CD4-positive, alpha-beta memory T cell (primary cell): ENCODE measurements at regions of chr16 and their contacts with region 1.

Region 1: DNA sequence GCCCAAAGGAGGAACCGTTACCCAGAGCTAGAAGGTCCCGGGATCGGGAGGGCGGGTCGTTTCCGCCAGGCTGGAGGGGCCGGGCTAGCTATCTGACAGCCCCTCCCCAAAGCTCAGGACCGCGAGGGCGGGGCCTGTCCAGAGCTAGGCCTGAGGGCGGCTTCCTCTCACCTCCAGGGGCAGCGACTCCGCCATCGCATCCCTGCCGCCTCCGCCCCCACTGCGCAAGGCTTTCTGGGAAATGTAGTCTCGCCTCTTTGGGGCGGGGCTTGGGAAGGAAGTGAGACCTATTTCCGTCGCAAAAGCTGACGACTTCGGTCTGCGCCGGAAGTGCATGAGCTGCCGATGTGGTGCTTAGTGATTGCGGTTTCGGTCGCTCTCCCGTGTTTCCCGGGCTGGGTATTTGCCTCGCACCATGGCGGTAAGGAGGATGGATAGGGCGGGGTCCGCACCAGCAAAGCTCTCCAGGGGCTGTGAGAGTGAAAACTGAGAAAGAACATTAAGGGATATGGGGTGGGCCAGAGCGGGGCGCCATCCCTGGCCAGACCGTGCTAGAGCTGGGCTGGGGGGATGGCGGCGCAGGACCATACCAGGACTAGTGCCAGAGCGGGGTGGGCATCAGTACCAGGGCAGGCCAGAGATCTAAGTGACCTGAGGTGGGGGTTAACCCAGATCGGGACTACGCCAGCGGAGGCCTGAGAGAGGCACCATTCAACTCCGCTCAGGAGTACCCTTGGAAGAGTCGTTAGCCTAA is at the start of gene TMEM208:
- DNase-seq: peak; percentile 95 to 99 (median 97)
- H3K4me3 ChIP-seq: peak within 1 kb of the TSS; percentile 73 to 99
- H3K4me3 Mint-ChIP-seq: peak within 1 kb of the TSS; percentile 98 to 100 (median 100)
- H3K27ac ChIP-seq: peak within 1 kb of the TSS; percentile 88
- H3K27ac Mint-ChIP-seq: peak within 1 kb of the TSS; percentile 96 to 100 (median 99)
- H3K4me1 ChIP-seq: peaks cover 51% of the 10 kb centered on the region
- H3K4me1 Mint-ChIP-seq: peaks cover 43 to 58% (median 54%) of the 10 kb centered on the region in 4 donors
- H3K27me3 ChIP-seq: no peaks in the 10 kb centered on the region
- H3K27me3 Mint-ChIP-seq: no peaks in the 10 kb centered on the region
- total RNA-seq, gene TMEM208: 35.5 to 35.7 TPM

Region 2: GRCh38 chr16:67191995-67192681 is 34.8 kb before region 1 on chr16 and contains the start of gene E2F4:
- CTCF ChIA-PET with region 1: no interaction called
- POLR2A ChIA-PET with region 1: interaction called, 15 read pairs
- intact Hi-C with region 1: loop called (anchors 2 kb)
- DNase-seq: peak; percentile 80 to 85 (median 83)
- H3K4me3 ChIP-seq: peak within 1 kb of the TSS; percentile 84 to 87
- H3K4me3 Mint-ChIP-seq: peak within 1 kb of the TSS; percentile 86 to 96 (median 90)
- H3K27ac ChIP-seq: peak within 1 kb of the TSS; percentile 80
- H3K27ac Mint-ChIP-seq: peak within 1 kb of the TSS; percentile 84 to 95 (median 91)
- H3K4me1 ChIP-seq: peaks cover 30% of the 10 kb centered on the region
- H3K4me1 Mint-ChIP-seq: peaks cover 24 to 50% (median 41%) of the 10 kb centered on the region in 4 donors
- H3K27me3 ChIP-seq: no peaks in the 10 kb centered on the region
- H3K27me3 Mint-ChIP-seq: no peaks in the 10 kb centered on the region
- total RNA-seq, gene E2F4: 87.3 to 91.3 TPM

Region 3: DNA sequence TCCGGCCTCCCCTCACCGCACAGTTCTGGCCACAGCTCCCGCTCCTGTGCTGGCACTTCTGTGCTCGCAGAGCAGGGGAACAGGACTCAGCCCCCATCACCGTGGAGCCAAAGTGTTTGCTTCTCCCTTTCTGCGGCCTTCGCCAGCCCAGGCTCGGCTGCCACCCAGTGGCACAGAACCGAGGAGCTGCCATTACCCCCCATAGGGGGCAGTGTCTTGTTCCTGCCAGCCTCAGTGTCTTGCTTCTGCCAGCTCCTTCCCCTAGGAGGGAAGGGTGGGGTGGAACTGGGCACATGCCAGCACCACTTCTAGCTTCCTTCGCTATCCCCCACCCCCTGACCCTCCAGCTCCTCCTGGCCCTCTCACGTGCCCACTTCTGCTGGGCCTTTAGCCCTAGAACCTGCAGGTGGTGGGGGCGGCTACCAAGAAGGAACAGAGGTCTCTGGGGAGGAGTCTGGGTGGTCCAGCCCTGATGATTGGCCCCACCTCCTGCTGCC is 28.7 kb before region 1 on chr16:
- CTCF ChIA-PET with region 1: interaction called, 8 read pairs
- POLR2A ChIA-PET with region 1: interaction called, 15 read pairs
- intact Hi-C with region 1: loop called (anchors 2 kb)
- DNase-seq: peak in 1 of 5 donors; percentile 22
- H3K4me3 ChIP-seq: no peak overlapping the region
- H3K4me3 Mint-ChIP-seq: no peak overlapping the region
- H3K27ac ChIP-seq: no peak overlapping the region
- H3K27ac Mint-ChIP-seq: peak overlapping the region in 4 of 7 donors; percentile 53 to 78 (median 73)
- H3K4me1 ChIP-seq: peaks cover 11% of the 10 kb centered on the region
- H3K4me1 Mint-ChIP-seq: peaks cover 11 to 41% (median 28%) of the 10 kb centered on the region in 4 donors
- H3K27me3 ChIP-seq: no peaks in the 10 kb centered on the region
- H3K27me3 Mint-ChIP-seq: no peaks in the 10 kb centered on the region

Region 4: DNA sequence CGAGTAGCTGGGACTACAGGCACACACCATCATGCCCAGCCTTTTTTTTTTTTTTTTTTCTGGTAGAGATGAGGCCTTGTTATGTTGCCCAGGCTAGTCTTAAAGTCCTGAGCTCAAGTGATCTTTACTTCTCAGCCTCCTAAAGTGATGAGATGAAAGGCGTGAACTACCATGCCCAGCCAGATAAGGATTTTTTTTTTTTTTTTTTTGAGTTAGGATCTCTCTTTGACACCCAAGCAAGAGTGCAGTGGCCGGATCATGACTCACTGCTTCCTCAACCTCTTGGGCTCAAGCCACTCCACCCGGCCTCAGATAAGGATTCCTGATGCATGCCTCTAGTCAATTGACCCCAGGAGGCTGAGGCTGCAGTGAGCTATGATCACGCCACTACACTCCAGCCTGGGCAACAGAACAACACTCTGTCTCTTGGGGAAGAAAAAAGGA is 41.2 kb after region 1 on chr16:
- CTCF ChIA-PET with region 1: no interaction called
- POLR2A ChIA-PET with region 1: no interaction called
- intact Hi-C with region 1: no loop called
- DNase-seq: no peak
- H3K4me3 ChIP-seq: no peak overlapping the region
- H3K4me3 Mint-ChIP-seq: no peak overlapping the region
- H3K27ac ChIP-seq: no peak overlapping the region
- H3K27ac Mint-ChIP-seq: no peak overlapping the region
- H3K4me1 ChIP-seq: no peaks in the 10 kb centered on the region
- H3K4me1 Mint-ChIP-seq: no peaks in the 10 kb centered on the region
- H3K27me3 ChIP-seq: no peaks in the 10 kb centered on the region
- H3K27me3 Mint-ChIP-seq: peaks cover 2 to 7% of the 10 kb centered on the region in 2 donors

Region 5: GRCh38 chr16:67279296-67280089 is 52.5 kb after region 1 on chr16 and contains the start of gene PLEKHG4:
- CTCF ChIA-PET with region 1: interaction called, 5 read pairs
- POLR2A ChIA-PET with region 1: interaction called, 4 read pairs
- intact Hi-C with region 1: loop called (anchors 2 kb)
- DNase-seq: peak; percentile 74 to 80 (median 78)
- H3K4me3 ChIP-seq: peak within 1 kb of the TSS; percentile 52 to 68
- H3K4me3 Mint-ChIP-seq: peak within 1 kb of the TSS; percentile 81 to 89 (median 84)
- H3K27ac ChIP-seq: peak within 1 kb of the TSS; percentile 40
- H3K27ac Mint-ChIP-seq: peak within 1 kb of the TSS; percentile 57 to 92 (median 78)
- H3K4me1 ChIP-seq: peaks cover 20% of the 10 kb centered on the region
- H3K4me1 Mint-ChIP-seq: peaks cover 3 to 26% (median 15%) of the 10 kb centered on the region in 4 donors
- H3K27me3 ChIP-seq: no peaks in the 10 kb centered on the region
- H3K27me3 Mint-ChIP-seq: no peaks in the 10 kb centered on the region
- total RNA-seq, gene PLEKHG4: 17.3 to 24.0 TPM